Calu3 (cell line): ENCODE measurements at regions of chr12 and their contacts with region 1.

Region 1: GRCh38 chr12:79690638-79691493 is at the start of gene PAWR:
- DNase-seq: peak; percentile 92
- H3K4me3 Mint-ChIP-seq: peak within 1 kb of the TSS; percentile 75
- H3K27ac Mint-ChIP-seq: peak within 1 kb of the TSS; percentile 93
- H3K4me1 Mint-ChIP-seq: peaks cover 39% of the 10 kb centered on the region
- H3K27me3 Mint-ChIP-seq: no peaks in the 10 kb centered on the region
- CTCF ChIP-seq: no peak
- total RNA-seq, gene PAWR: 172 and 204 TPM in 2 replicates

Region 2: DNA sequence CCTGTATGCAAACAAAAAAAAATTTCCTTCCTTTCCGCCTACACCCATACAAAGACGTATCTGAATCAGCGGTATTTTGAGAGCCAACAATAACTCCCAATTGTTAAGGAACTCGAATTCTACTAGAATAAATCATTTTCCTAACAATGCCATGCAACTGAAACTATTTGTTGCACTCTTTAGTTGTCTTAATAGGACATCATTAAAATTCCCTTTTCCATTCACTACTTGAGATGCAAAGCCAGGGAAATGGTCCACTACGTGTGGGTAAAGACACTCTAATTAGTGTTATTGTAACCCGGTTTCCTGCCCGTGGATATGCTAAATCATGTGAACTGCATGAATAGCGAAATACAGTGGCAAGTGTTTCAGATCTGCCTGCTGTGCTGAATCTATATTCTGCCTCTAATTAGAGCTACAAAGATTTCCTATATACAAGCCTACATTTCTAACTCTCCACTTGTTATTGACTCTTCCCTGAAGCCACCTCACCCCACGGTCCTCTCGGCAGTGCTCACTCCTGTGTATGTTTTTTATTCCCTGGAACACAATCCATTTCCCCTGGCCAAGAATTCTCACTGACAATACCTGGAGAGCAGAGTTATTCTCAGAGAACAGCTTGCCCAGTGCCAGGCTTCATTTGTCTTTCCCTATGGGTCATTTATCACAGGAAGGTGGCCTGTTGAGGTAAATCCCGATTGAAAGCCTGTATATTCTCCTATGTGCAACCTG is 168.4 kb before region 1 on chr12:
- CTCF ChIA-PET with region 1: interaction called, 10 read pairs
- intact Hi-C with region 1: no loop called
- DNase-seq: no peak
- H3K4me3 Mint-ChIP-seq: no peak overlapping the region
- H3K27ac Mint-ChIP-seq: no peak overlapping the region
- H3K4me1 Mint-ChIP-seq: no peaks in the 10 kb centered on the region
- H3K27me3 Mint-ChIP-seq: no peaks in the 10 kb centered on the region
- CTCF ChIP-seq: no peak

Region 3: DNA sequence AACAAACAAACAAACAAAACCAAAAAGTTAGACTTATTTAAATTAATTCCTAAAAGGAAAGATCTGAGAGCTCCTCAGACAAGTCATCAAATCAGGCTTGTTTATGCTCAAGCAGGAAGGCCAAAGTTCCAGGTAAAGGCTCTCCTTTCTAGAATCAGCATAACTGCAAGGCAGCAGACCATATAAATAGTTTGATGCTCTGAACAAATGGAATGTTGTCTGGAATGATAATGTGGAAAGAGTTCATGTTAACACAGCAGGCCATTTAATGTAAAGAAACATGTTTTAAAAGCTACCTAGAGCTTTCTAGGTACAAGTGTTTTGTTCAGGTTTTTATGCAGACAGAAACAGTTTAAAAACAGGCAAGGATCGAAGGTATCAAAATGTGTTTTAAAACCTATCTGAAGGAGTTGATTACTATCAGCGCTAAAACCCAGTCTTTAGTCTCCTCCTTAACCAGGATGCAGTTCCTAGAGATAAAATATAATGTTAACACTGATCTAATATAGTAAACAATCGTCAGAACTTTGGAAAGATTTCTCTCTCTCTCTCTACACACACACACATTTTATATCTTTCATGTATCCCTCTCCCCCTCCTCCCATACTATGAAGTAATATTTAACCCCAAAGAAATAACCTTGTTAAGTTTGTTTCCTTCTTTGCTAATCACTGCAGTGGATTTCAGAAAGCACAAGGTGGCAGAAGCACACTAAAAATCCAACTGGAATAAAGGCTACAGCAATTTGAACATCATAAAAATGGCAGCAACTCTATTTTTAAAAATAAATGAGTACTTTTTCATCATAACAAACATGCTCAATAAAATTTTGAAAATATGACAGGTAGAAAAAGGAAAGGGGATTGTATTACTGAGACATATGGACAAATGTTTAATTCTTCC is 135.6 kb before region 1 on chr12:
- CTCF ChIA-PET with region 1: interaction called, 3 read pairs
- intact Hi-C with region 1: loop called (anchors 2 kb)
- DNase-seq: peak; percentile 44
- H3K4me3 Mint-ChIP-seq: no peak overlapping the region
- H3K27ac Mint-ChIP-seq: peak overlapping the region; percentile 59
- H3K4me1 Mint-ChIP-seq: peaks cover 61% of the 10 kb centered on the region
- H3K27me3 Mint-ChIP-seq: no peaks in the 10 kb centered on the region
- CTCF ChIP-seq: peak; percentile 61

Region 4: DNA sequence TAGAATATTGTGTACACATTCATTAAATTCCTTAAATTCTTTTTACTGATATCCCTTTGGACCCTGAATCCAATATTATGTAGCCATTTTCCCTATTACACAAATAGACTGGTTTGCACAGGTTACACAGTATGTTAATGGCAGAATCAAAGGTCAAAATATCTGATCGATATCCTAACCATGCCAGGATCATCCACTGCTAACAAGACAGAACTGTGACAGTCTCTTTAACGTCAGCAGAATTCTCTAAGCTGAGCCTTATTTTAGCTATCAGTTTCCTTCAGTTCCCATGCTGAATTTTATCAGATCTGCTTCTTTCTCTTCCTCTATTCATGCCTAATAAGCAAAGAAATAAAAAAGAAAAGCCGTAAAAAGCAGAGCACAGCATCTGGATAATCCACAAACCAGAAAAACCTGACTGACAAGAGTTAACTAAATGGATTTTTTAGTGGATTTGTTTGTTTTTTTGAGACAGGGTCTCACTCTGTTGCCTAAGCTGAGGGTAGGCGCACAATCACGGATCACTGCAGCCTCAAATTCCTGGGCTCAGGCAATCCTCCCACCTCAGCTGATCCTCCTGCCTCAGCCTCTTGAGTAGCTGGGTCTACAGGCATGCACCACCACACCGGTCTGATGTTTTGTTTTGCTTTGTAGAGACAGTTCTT is 130.5 kb before region 1 on chr12:
- CTCF ChIA-PET with region 1: interaction called, 3 read pairs
- intact Hi-C with region 1: loop called (anchors 2 kb)
- DNase-seq: peak; percentile 21
- H3K4me3 Mint-ChIP-seq: no peak overlapping the region
- H3K27ac Mint-ChIP-seq: peak overlapping the region; percentile 86
- H3K4me1 Mint-ChIP-seq: peaks cover 49% of the 10 kb centered on the region
- H3K27me3 Mint-ChIP-seq: no peaks in the 10 kb centered on the region
- CTCF ChIP-seq: no peak

Region 5: DNA sequence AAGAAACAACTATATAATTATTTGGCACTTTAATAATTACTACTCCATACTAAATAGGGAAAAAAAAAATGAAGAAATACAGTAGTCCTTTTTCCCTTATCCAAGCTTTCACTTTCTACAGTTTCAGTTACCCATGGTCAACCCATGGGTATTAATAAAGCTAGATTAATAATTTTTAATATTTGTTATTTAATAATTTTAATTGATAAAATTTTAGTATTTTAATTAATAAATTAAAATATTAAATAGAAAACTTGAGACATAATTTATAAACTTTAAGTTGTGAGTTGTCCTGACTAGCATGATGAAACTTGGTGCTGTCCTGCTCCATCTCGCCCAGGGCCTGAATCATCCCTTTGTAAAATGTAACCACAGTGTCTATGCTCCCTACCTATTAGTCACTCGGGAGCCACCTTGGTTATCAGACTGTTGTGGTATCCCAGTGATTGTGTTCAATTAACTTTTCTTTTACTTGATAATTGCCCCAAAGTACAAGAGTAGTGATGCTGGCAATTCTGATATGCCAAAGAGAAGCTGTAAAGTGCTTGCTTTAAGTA is 71.9 kb before region 1 on chr12:
- CTCF ChIA-PET with region 1: no interaction called
- intact Hi-C with region 1: no loop called
- DNase-seq: no peak
- H3K4me3 Mint-ChIP-seq: no peak overlapping the region
- H3K27ac Mint-ChIP-seq: no peak overlapping the region
- H3K4me1 Mint-ChIP-seq: peaks cover 32% of the 10 kb centered on the region
- H3K27me3 Mint-ChIP-seq: no peaks in the 10 kb centered on the region
- CTCF ChIP-seq: no peak

Region 6: DNA sequence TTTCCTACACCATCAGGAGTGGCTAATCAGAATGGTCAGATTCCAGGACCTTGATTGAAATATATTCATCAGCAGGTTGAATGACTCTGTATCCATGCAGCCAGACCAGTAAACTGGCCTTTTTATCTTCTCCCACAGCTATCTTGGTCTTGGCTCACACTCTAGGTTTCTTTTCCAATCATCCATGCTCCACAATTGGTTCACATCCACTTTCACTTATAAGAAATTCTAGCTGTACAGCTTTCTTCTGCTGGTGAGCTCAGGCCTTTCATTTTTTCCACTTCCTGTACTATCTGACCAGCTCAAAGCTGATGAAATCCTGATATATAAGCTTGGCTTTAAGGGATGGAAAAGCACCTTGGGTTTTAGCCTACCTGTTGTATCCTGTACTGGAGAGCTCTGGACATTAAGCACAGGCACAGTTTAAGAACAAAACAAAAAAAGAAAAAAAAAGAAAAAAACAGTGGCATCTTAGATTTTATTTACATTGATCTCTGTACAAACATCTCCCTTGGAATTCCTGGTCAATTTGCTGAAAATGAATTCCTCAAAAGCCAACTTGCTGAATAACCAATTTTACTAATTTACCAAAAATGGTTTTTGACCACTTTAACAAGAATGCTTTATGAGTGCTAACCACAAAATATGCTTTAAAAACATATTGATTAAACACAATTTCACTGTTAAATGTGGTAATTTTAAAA is 91.5 kb after region 1 on chr12:
- CTCF ChIA-PET with region 1: no interaction called
- intact Hi-C with region 1: no loop called
- DNase-seq: no peak
- H3K4me3 Mint-ChIP-seq: no peak overlapping the region
- H3K27ac Mint-ChIP-seq: peak overlapping the region; percentile 72
- H3K4me1 Mint-ChIP-seq: no peaks in the 10 kb centered on the region
- H3K27me3 Mint-ChIP-seq: no peaks in the 10 kb centered on the region
- CTCF ChIP-seq: no peak

Region 7: GRCh38 chr12:79883216-79883615 is 192.3 kb after region 1 on chr12:
- CTCF ChIA-PET with region 1: no interaction called
- intact Hi-C with region 1: no loop called
- DNase-seq: no peak
- H3K4me3 Mint-ChIP-seq: no peak overlapping the region
- H3K27ac Mint-ChIP-seq: no peak overlapping the region
- H3K4me1 Mint-ChIP-seq: peaks cover 38% of the 10 kb centered on the region
- H3K27me3 Mint-ChIP-seq: no peaks in the 10 kb centered on the region
- CTCF ChIP-seq: no peak